Left cardiac atrium (tissue), 4 donors: ENCODE measurements at regions of chr7 and their contacts with region 1.

Region 1: GRCh38 chr7:82234457-82235049 is 209.0 kb downstream of the CACNA2D1 start:
- DNase-seq: no peak
- ATAC-seq: no peak

Region 2: GRCh38 chr7:81846398-81846797 is 388.2 kb before region 1 on chr7:
- intact Hi-C with region 1: no loop called
- DNase-seq: peak; percentile 14
- ATAC-seq: peak; percentile 50 to 90

Region 3: GRCh38 chr7:82036146-82036886 is 198.2 kb before region 1 on chr7:
- intact Hi-C with region 1: loop called in 1 of 2 experiments (anchors 10 kb)
- DNase-seq: no peak
- ATAC-seq: peak in 1 of 2 donors; percentile 46

Region 4: DNA sequence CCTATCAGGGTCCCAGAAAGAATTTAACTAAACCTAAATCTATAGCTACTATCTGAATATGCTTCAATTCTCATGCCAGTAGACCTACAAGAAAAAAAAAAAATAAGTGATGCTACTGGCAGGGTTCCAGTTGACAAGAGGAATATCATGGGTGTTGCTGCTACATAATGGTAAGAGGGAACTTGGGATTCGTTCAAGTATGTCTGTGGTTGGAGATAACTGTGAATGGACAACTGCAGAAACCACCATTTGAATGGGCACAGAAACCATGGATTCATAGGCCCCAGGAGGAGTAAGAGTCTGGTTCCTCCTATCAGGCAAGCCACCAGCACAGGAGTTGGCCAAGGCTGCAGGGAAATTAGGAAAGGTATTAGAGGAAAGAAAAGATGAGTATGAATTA is 177.1 kb before region 1 on chr7:
- intact Hi-C with region 1: no loop called
- DNase-seq: no peak
- ATAC-seq: no peak

Region 5: DNA sequence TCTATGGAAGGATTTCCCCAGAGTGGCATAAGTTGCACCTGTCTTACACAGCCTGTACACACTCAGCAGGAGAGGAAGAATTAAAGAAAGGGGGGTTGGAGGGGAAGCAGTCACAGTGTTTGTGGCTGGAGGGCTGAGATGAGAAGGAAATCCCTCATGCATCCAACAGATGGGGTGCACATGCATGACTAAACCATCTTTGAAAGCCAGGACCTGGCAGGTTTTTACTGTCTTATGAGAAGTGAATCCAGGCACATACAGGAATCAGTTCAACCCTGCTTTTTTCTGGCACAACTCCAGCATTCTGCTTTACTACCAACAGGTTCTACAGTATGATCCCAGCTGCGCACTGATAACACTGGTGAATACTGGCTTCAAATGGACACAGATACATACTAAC is 101.4 kb after region 1 on chr7:
- intact Hi-C with region 1: no loop called
- DNase-seq: no peak
- ATAC-seq: no peak

Region 6: GRCh38 chr7:82443547-82444219 is 209.1 kb after region 1 on chr7 and contains the start of gene CACNA2D1:
- intact Hi-C with region 1: loop called in 1 of 2 experiments (anchors 5 kb)
- DNase-seq: peak; percentile 91
- ATAC-seq: peak; percentile 95 to 97
- total RNA-seq, gene CACNA2D1: 29.5 to 39.8 TPM

Region 7: DNA sequence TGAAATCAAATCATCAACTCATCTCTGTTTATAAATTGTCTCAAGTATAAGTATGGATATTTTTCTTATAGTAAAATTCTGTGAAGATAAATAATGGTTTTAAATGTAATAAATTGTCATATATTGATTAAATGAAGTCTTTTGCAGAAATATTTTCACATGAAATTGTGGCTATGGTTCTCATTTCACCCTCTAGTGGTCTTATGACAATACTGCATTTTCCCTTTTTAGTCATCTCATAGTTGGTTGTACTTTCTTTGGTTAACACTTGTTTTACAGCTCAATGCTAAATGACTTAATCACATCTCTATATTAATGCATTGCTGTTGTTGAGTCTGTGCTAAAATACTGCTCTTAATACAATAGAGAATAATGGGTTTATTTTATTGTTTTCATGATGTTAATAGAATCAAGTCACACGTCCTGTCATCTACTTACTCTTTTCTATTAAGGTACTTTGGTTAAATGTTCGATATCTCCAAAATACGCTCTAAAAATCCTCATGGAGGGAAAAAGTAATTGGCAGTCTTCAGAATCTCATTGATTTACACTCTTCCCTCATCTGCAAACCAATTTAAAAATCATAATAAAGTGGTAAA is 247.0 kb after region 1 on chr7:
- intact Hi-C with region 1: loop called in 1 of 2 experiments (anchors 5 kb)
- DNase-seq: no peak
- ATAC-seq: no peak

Region 8: GRCh38 chr7:82572195-82572880 is 337.8 kb after region 1 on chr7:
- intact Hi-C with region 1: loop called in 1 of 2 experiments (anchors 10 kb)
- DNase-seq: peak; percentile 90
- ATAC-seq: peak; percentile 88 to 96